ENCODE measurements at regions of chr2 and their contacts with region 1.

Region 1: DNA sequence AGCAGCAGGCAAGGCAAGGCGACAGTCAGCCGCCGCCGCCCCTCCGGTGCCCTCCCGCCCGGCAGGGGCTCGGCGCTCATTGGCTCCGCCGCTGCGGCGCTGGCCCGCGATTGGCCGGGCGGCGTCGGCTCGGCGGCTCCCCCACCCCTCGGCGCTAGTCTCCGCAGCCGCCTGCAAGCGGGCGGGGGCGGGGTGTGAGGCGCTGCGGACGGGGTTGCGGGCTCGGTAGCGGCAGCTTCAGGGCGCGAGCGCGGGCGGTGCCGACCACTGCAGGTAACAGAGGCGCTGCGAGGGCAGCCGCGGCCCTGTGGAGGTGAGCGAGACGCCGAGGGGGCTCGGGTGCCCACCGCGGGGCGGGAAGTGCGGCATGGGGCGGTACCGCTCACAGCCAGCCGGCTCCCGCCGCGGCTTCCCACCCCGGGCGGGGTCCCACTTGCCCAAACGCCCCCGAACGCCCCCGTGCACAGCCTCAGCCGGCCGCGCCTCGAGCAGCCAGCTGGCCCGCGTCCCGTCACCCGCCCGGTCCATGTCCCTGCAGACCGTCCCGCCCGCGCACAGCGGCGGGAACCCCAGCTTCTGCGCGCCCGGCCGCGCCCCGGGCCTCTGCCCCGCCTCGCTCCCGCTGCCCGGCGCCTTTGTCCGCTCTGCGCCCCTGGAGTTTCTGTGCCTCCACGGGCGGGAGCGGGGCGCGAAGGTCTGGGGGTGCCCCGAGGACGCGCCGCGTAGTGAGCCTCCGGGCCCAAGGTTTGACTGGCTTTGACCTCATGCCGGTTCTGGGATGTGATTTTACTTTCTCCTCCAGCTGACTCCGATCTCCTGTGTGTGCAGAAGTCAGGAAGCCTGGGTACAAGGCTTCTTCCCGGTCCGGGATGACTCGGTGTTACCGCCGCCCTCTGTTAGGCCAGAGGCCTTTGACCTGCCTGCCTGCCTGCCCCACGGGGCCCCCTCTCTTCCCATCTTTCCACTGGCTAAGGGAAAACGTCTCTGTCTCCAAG is at the start of gene SANBR:
- DNase-seq: peak; percentile 83 to 88 (median 86)
- H3K4me3 ChIP-seq: peak within 1 kb of the TSS; percentile 50 to 59
- H3K4me3 Mint-ChIP-seq: peak within 1 kb of the TSS; percentile 93 to 98 (median 97)
- H3K27ac ChIP-seq: peak within 1 kb of the TSS; percentile 51
- H3K27ac Mint-ChIP-seq: peak within 1 kb of the TSS; percentile 89 to 95 (median 93)
- H3K4me1 ChIP-seq: peaks cover 8% of the 10 kb centered on the region
- H3K4me1 Mint-ChIP-seq: peaks cover 7 to 16% (median 8%) of the 10 kb centered on the region in 4 donors
- H3K27me3 ChIP-seq: no peaks in the 10 kb centered on the region
- H3K27me3 Mint-ChIP-seq: no peaks in the 10 kb centered on the region
- total RNA-seq, gene SANBR: 5.4 to 6.0 TPM

Region 2: GRCh38 chr2:61144697-61145268 is 78.8 kb after region 1 on chr2:
- CTCF ChIA-PET with region 1: no interaction called
- POLR2A ChIA-PET with region 1: interaction called, 3 read pairs
- intact Hi-C with region 1: loop called (anchors 1 kb)
- DNase-seq: peak; percentile 88 to 90 (median 90)
- H3K4me3 ChIP-seq: peak overlapping the region; percentile 85 to 90
- H3K4me3 Mint-ChIP-seq: peak overlapping the region; percentile 91 to 97 (median 95)
- H3K27ac ChIP-seq: peak overlapping the region; percentile 55
- H3K27ac Mint-ChIP-seq: peak overlapping the region; percentile 86 to 98 (median 97)
- H3K4me1 ChIP-seq: peaks cover 10% of the 10 kb centered on the region
- H3K4me1 Mint-ChIP-seq: peaks cover 6 to 11% (median 9%) of the 10 kb centered on the region in 4 donors
- H3K27me3 ChIP-seq: no peaks in the 10 kb centered on the region
- H3K27me3 Mint-ChIP-seq: no peaks in the 10 kb centered on the region

Measured in CD4-positive, alpha-beta memory T cell (primary cell).